Left colon (tissue), 2 donors: ENCODE measurements at regions of chr1 and their contacts with region 1.

Region 1: GRCh38 chr1:27489910-27490741 is at the start of gene WASF2:
- DNase-seq: peak; percentile 96 to 97
- ATAC-seq: peak; percentile 89
- total RNA-seq, gene WASF2: 97.7 to 144 TPM

Region 2: DNA sequence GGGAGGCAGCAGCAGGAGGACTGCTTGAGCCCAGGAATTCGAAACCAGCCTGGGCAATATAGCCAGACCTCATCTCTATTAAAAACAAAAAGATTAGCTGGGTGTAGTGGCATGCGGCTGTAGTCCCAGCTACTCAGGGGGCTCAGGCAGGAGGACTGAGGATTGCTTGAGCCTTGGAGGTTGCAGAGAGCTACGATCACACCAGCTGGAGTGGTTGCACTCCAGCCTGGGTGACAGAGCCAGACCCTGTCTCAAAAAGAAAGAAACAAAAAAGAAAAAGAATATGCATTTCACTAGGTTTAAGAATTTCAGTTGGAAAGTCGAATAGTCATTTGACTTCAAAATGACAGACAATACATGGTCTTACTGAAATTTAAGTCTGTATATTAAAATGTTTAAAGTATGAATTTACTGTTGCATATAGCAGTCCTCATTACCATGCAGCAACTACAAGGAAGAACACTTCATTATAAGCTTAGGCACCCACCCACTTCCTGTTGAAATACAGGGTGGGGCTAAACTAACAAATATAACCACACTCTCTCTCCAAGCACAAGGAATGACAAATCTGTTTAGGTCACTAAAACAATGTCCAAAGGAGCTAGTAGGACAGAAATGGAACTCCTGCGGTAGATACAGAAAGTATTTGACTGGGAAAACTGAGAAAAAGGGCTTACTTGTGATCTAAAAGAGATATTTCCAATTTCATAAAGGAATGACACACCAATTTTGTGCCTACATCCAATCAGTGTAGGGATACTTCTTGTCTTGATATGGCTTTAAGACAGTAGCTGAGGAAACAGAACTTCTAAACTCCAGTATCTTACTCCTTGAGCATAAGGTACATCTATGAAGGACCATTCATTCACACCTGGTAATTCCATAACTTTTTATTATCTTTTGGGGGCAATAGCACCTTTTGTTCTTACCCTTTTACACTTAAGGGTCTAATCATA is 53.6 kb before region 1 on chr1:
- intact Hi-C with region 1: loop called in 1 of 2 experiments (anchors 10 kb)
- DNase-seq: peak in 1 of 2 donors; percentile 44
- ATAC-seq: peak; percentile 93